Endothelial cell of umbilical vein (primary cell): ENCODE measurements at regions of chr9 and their contacts with region 1.

Region 1: DNA sequence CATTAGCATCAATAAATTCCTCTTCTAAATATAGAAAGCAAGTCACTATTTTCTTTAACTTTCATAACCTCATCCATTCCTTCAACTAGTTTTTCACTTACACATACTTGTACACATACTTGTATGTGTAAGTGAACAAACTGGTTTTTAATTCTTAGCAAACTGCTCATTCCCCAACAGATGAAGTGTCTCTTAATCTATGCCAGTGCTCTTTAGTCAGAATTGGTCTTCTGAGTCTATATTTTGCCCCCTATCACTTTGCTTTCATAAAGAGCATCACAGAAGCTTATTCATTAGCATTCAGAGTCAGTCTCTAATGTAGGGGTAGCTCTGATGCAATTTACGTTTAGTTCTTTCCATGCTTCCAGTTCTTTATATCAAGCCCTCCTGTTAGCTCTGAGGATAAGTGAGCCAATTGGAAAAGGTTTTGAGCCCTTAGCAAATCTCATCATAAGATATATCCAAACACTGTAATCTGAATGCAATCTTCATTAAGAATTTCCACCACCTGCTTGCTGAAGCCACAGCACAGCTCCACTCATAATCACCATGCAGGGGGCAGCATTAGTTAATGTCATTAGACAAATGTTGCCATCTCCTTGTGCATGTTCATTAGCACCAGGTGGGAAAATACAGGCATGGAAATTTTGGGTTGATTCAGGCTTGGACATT is 178.5 kb upstream of the SLC24A2 start:
- DNase-seq: no peak
- H3K4me3 ChIP-seq: no peak overlapping the region
- H3K27ac ChIP-seq: no peak overlapping the region
- H3K4me1 ChIP-seq: no peaks in the 10 kb centered on the region
- H3K27me3 ChIP-seq: no peaks in the 10 kb centered on the region
- CTCF ChIP-seq: no peak
- POLR2A ChIP-seq: no peak

Region 2: GRCh38 chr9:20095430-20096092 is 128.2 kb after region 1 on chr9:
- CTCF ChIA-PET with region 1: no interaction called
- POLR2A ChIA-PET with region 1: no interaction called
- dilution Hi-C with region 1: no loop called
- intact Hi-C with region 1: no loop called
- DNase-seq: no peak
- H3K4me3 ChIP-seq: no peak overlapping the region
- H3K27ac ChIP-seq: no peak overlapping the region
- H3K4me1 ChIP-seq: no peaks in the 10 kb centered on the region
- H3K27me3 ChIP-seq: no peaks in the 10 kb centered on the region
- CTCF ChIP-seq: no peak
- POLR2A ChIP-seq: no peak

Region 3: DNA sequence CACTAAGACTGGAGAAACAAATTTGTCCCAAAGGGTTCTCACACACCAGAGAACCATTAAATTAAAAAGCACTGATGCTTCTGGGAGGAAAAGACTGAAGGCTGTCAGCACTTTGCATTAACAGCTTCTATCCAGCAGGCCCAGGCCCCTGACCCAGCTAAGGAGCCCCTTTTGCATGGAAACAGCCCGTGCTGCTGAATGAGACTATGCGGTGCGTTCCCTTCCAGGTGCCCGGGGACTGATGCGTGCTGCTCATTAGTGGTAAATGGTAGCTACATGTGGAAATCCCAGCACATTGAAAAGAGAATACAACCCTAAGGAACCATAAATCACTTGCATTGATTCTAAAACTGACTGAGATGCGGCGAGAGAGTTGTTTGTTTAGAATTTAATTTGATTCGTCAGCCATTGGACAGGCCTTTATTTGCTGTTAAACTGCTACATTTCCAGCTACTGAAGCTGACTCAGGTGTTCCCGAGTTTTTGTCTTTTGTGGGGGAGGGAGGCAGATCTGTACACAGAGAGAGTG is 172.5 kb after region 1 on chr9:
- CTCF ChIA-PET with region 1: no interaction called
- POLR2A ChIA-PET with region 1: no interaction called
- dilution Hi-C with region 1: no loop called
- intact Hi-C with region 1: loop called (anchors 10 kb)
- DNase-seq: no peak
- H3K4me3 ChIP-seq: no peak overlapping the region
- H3K27ac ChIP-seq: no peak overlapping the region
- H3K4me1 ChIP-seq: no peaks in the 10 kb centered on the region
- H3K27me3 ChIP-seq: peaks cover 0 to 5% of the 10 kb centered on the region in 2 experiments
- CTCF ChIP-seq: no peak
- POLR2A ChIP-seq: no peak